GM12878 (cell line): ENCODE measurements at regions of chr1 and their contacts with region 1.

Region 1: GRCh38 chr1:203702130-203702577 is 62.8 kb upstream of the LAX1 start:
- DNase-seq: peak; percentile 40
- ATAC-seq: peak; percentile 92
- H3K4me3 ChIP-seq: no peak overlapping the region
- H3K27ac ChIP-seq: no peak overlapping the region
- H3K4me1 ChIP-seq: no peaks in the 10 kb centered on the region; the same call in 1 of the 2 replicates
- H3K27me3 ChIP-seq: 0 out of 4 replicates have a peak, but pooled peaks cover 0 to 2% of the 10 kb centered on the region in 2 experiments
- CTCF ChIP-seq: peak; percentile 77 to 89 (median 88)
- EP300 ChIP-seq: no peak
- POLR2A ChIP-seq: no peak
- RAD21 ChIP-seq: peak; percentile 94

Region 2: GRCh38 chr1:203361945-203362719 is 340.0 kb before region 1 on chr1:
- CTCF ChIA-PET with region 1: no interaction called
- POLR2A ChIA-PET with region 1: no interaction called
- RAD21 ChIA-PET with region 1: no interaction called
- SMC1A ChIA-PET with region 1: no interaction called
- in situ Hi-C with region 1: no loop called
- intact Hi-C with region 1: no loop called
- DNase-seq: no peak
- ATAC-seq: peak; percentile 91
- H3K4me3 ChIP-seq: no peak overlapping the region
- H3K27ac ChIP-seq: no peak overlapping the region
- H3K4me1 ChIP-seq: no peaks in the 10 kb centered on the region
- H3K27me3 ChIP-seq: peaks cover 0 to 5% of the 10 kb centered on the region in 2 experiments; a peak in 3 of 4 replicates
- CTCF ChIP-seq: no peak
- EP300 ChIP-seq: no peak
- POLR2A ChIP-seq: no peak
- RAD21 ChIP-seq: no peak

Region 3: GRCh38 chr1:203504397-203505250 is 197.5 kb before region 1 on chr1:
- CTCF ChIA-PET with region 1: interaction called, 175 read pairs
- POLR2A ChIA-PET with region 1: interaction called, 3 read pairs
- RAD21 ChIA-PET with region 1: interaction called, 64 read pairs
- SMC1A ChIA-PET with region 1: interaction called, 100 read pairs
- in situ Hi-C with region 1: loop called (anchors 5 kb)
- intact Hi-C with region 1: loop called (anchors 1 kb)
- DNase-seq: peak; percentile 20
- ATAC-seq: peak; percentile 93
- H3K4me3 ChIP-seq: no peak overlapping the region
- H3K27ac ChIP-seq: no peak overlapping the region
- H3K4me1 ChIP-seq: no peaks in the 10 kb centered on the region
- H3K27me3 ChIP-seq: no peaks in the 10 kb centered on the region; a peak in 1 of 4 replicates
- CTCF ChIP-seq: peak; percentile 72 to 73 (median 72)
- EP300 ChIP-seq: no peak
- POLR2A ChIP-seq: no peak
- RAD21 ChIP-seq: peak; percentile 84

Region 4: GRCh38 chr1:203512830-203513611 is 189.1 kb before region 1 on chr1:
- CTCF ChIA-PET with region 1: interaction called, 175 read pairs
- POLR2A ChIA-PET with region 1: no interaction called
- RAD21 ChIA-PET with region 1: interaction called, 64 read pairs
- SMC1A ChIA-PET with region 1: interaction called, 100 read pairs
- in situ Hi-C with region 1: loop called (anchors 5 kb)
- intact Hi-C with region 1: loop called (anchors 1 kb)
- DNase-seq: no peak
- ATAC-seq: peak; percentile 66
- H3K4me3 ChIP-seq: no peak overlapping the region
- H3K27ac ChIP-seq: no peak overlapping the region
- H3K4me1 ChIP-seq: no peaks in the 10 kb centered on the region; the same call in 1 of the 2 replicates
- H3K27me3 ChIP-seq: peaks cover 0 to 3% of the 10 kb centered on the region in 2 experiments; a peak in 1 of 4 replicates
- CTCF ChIP-seq: no peak
- EP300 ChIP-seq: no peak
- POLR2A ChIP-seq: no peak
- RAD21 ChIP-seq: no peak

Region 5: GRCh38 chr1:203593723-203594122 is 108.4 kb before region 1 on chr1:
- CTCF ChIA-PET with region 1: interaction called, 16 read pairs
- POLR2A ChIA-PET with region 1: no interaction called
- RAD21 ChIA-PET with region 1: interaction called, 11 read pairs
- SMC1A ChIA-PET with region 1: no interaction called
- in situ Hi-C with region 1: no loop called
- intact Hi-C with region 1: loop called (anchors 1 kb)
- DNase-seq: no peak
- ATAC-seq: peak; percentile 91
- H3K4me3 ChIP-seq: no peak overlapping the region
- H3K27ac ChIP-seq: no peak overlapping the region
- H3K4me1 ChIP-seq: no peaks in the 10 kb centered on the region
- H3K27me3 ChIP-seq: peaks cover 1 to 3% of the 10 kb centered on the region in 2 experiments; a peak in 1 of 4 replicates
- CTCF ChIP-seq: peak; percentile 39 to 54 (median 49); a peak in 5 of 6 replicates
- EP300 ChIP-seq: no peak
- POLR2A ChIP-seq: no peak
- RAD21 ChIP-seq: peak; percentile 41

Region 6: GRCh38 chr1:203625628-203626019 is 76.5 kb before region 1 on chr1:
- CTCF ChIA-PET with region 1: interaction called, 143 read pairs
- POLR2A ChIA-PET with region 1: interaction called, 3 read pairs
- RAD21 ChIA-PET with region 1: interaction called, 81 read pairs
- SMC1A ChIA-PET with region 1: interaction called, 84 read pairs
- in situ Hi-C with region 1: no loop called
- intact Hi-C with region 1: loop called (anchors 2 kb)
- DNase-seq: peak; percentile 54
- ATAC-seq: peak; percentile 72
- H3K4me3 ChIP-seq: 0 out of 2 replicates have a peak overlapping the region, but pooled peaks have one; percentile 59
- H3K27ac ChIP-seq: no peak overlapping the region
- H3K4me1 ChIP-seq: peaks cover 28% of the 10 kb centered on the region
- H3K27me3 ChIP-seq: peaks cover 1 to 7% of the 10 kb centered on the region in 2 experiments; a peak in 3 of 4 replicates
- CTCF ChIP-seq: peak; percentile 43 to 81 (median 62); a peak in 5 of 6 replicates
- EP300 ChIP-seq: 0 out of 4 replicates have a peak, but pooled peaks of 1 of the 2 experiments have one; percentile 10
- POLR2A ChIP-seq: no peak
- RAD21 ChIP-seq: peak; percentile 80

Region 7: DNA sequence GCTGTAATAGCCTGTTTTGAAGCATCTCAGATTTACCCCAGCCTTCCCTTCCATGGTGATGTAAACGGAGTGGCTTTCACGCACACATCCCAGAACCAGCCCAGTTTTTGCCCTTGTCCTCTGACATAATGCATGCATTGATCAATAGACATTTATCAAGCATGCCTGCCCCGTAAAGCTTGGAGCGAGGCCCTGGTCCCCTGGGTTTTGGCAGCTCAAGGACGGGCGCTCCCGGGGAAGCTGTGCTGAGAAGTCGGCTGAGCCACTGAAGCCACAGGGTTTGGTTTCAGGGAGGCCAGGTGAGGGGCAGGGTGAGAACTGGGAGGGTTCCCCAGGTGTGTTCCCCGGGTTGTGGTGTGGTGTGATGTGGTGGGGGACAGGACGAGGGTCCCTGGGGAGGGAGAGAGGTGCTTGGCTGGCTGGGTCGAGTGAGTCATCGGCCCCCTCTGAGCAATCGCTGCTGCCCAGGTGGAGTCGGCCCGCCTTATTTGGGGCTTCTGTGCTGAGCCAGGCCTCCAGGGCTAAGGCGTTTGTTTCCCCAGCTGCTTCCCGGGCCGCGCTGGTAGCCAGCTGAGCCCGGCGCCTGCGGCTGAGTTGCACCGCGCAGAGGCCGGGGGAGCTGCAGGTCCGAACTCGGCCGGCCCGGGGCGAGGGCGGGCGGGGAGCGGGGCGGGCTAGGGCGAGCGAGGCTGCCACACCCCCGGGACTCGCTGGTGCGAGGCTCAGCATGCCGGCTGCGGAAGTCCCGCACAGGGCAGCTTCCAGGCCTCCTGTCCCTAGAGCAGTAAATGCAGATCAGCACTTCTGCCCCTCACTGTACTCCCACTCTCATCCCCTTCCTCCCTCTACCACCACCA is 51.9 kb before region 1 on chr1:
- CTCF ChIA-PET with region 1: interaction called, 7 read pairs
- POLR2A ChIA-PET with region 1: no interaction called
- RAD21 ChIA-PET with region 1: interaction called, 6 read pairs
- SMC1A ChIA-PET with region 1: interaction called, 16 read pairs
- in situ Hi-C with region 1: no loop called
- intact Hi-C with region 1: no loop called
- DNase-seq: no peak
- ATAC-seq: peak; percentile 86
- H3K4me3 ChIP-seq: peak overlapping the region; percentile 12; the same call in 1 of the 2 replicates
- H3K27ac ChIP-seq: no peak overlapping the region; the same call in 1 of the 2 replicates
- H3K4me1 ChIP-seq: peaks cover 37% of the 10 kb centered on the region
- H3K27me3 ChIP-seq: no peaks in the 10 kb centered on the region
- CTCF ChIP-seq: no peak
- EP300 ChIP-seq: peak in 1 of 2 experiments; percentile 16; a peak in 1 of 4 replicates
- POLR2A ChIP-seq: no peak
- RAD21 ChIP-seq: no peak

Region 8: DNA sequence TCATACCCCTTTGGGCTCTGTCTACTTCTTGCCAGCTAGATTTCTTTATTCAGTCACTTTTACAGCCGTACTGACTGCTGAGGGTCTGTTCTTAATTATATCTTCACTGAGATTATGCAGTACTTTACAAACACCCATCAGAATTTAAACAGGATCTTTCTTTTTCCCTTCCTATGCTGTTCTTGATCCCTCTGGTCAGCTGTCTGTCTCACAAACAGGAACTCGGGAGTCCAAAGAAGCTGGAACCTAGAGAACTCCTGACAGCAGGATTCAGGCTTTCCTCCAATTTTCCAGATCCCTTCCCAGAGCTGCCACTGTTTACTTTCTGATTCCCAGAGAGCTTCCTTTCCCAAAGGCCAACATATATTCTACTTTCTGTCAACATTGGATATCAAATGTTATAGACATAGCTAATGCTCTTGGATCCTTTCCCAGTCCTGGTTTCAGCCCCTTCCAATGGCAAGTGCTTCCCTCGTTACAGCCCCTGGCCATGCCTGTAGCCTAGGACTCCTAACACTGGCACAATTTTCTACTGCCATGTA is 16.0 kb before region 1 on chr1:
- CTCF ChIA-PET with region 1: interaction called, 37 read pairs
- POLR2A ChIA-PET with region 1: no interaction called
- RAD21 ChIA-PET with region 1: no interaction called
- SMC1A ChIA-PET with region 1: interaction called, 13 read pairs
- in situ Hi-C with region 1: no loop called
- intact Hi-C with region 1: no loop called
- DNase-seq: no peak
- ATAC-seq: no peak
- H3K4me3 ChIP-seq: no peak overlapping the region
- H3K27ac ChIP-seq: no peak overlapping the region
- H3K4me1 ChIP-seq: no peaks in the 10 kb centered on the region
- H3K27me3 ChIP-seq: peaks cover 0 to 2% of the 10 kb centered on the region in 2 experiments; a peak in 2 of 4 replicates
- CTCF ChIP-seq: no peak
- EP300 ChIP-seq: no peak
- POLR2A ChIP-seq: no peak
- RAD21 ChIP-seq: no peak

Region 9: GRCh38 chr1:203880606-203881005 is 178.5 kb after region 1 on chr1:
- CTCF ChIA-PET with region 1: no interaction called
- POLR2A ChIA-PET with region 1: no interaction called
- RAD21 ChIA-PET with region 1: no interaction called
- SMC1A ChIA-PET with region 1: no interaction called
- in situ Hi-C with region 1: no loop called
- intact Hi-C with region 1: no loop called
- DNase-seq: no peak
- ATAC-seq: no peak
- H3K4me3 ChIP-seq: no peak overlapping the region
- H3K27ac ChIP-seq: no peak overlapping the region
- H3K4me1 ChIP-seq: no peaks in the 10 kb centered on the region
- H3K27me3 ChIP-seq: no peaks in the 10 kb centered on the region
- CTCF ChIP-seq: no peak
- EP300 ChIP-seq: no peak
- POLR2A ChIP-seq: no peak
- RAD21 ChIP-seq: no peak